Calu3 (cell line): ENCODE measurements at regions of chr1 and their contacts with region 1.

Region 1: DNA sequence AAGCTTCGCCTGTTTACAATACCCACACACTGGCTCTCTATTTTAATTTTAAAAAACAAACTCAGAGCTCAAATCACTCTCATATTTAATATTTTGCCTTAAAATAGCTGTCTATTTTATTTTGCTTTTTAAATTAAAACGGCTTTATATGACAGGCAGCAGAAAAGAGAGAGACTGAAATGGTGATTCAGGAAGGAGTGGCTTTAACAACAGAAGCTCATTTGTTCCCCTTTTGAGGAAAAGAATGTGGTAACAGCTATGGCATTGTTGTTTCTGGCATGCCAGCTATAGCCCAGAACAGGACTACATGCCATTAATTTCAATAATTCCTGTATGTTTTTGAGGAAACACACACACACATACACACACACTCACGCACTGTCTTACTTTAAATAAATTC is 234.2 kb upstream of the PTBP2 start:
- DNase-seq: peak; percentile 44
- H3K4me3 Mint-ChIP-seq: no peak overlapping the region
- H3K27ac Mint-ChIP-seq: peak overlapping the region; percentile 94
- H3K4me1 Mint-ChIP-seq: peaks cover 42% of the 10 kb centered on the region
- H3K27me3 Mint-ChIP-seq: no peaks in the 10 kb centered on the region
- CTCF ChIP-seq: no peak

Region 2: DNA sequence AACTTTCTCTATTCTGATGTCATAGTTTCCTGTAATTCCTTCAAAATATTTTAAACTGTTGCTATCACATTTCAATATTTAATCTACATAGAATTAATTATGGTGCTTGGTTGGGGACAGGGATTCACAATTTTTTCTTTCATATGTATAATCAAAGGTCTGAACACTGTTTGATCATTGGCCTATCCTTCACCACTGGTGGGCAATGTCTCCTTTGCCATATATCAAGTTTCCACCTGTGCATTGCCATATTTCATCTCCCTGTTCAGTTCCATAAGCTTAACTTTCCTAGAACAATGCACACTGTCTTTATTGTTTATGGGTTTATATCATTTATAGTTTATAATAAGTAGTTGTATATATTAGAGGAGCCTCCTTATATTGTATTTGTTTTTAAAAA is 140.7 kb before region 1 on chr1:
- CTCF ChIA-PET with region 1: no interaction called
- intact Hi-C with region 1: loop called (anchors 5 kb)
- DNase-seq: no peak
- H3K4me3 Mint-ChIP-seq: no peak overlapping the region
- H3K27ac Mint-ChIP-seq: no peak overlapping the region
- H3K4me1 Mint-ChIP-seq: no peaks in the 10 kb centered on the region
- H3K27me3 Mint-ChIP-seq: no peaks in the 10 kb centered on the region
- CTCF ChIP-seq: no peak

Region 3: GRCh38 chr1:96472471-96472870 is 14.9 kb before region 1 on chr1:
- CTCF ChIA-PET with region 1: interaction called, 4 read pairs
- intact Hi-C with region 1: loop called (anchors 1 kb)
- DNase-seq: no peak
- H3K4me3 Mint-ChIP-seq: no peak overlapping the region
- H3K27ac Mint-ChIP-seq: peak overlapping the region; percentile 80
- H3K4me1 Mint-ChIP-seq: peaks cover 41% of the 10 kb centered on the region
- H3K27me3 Mint-ChIP-seq: no peaks in the 10 kb centered on the region
- CTCF ChIP-seq: no peak

Region 4: GRCh38 chr1:96536581-96536980 is 49.2 kb after region 1 on chr1:
- CTCF ChIA-PET with region 1: no interaction called
- intact Hi-C with region 1: no loop called
- DNase-seq: no peak
- H3K4me3 Mint-ChIP-seq: no peak overlapping the region
- H3K27ac Mint-ChIP-seq: no peak overlapping the region
- H3K4me1 Mint-ChIP-seq: no peaks in the 10 kb centered on the region
- H3K27me3 Mint-ChIP-seq: no peaks in the 10 kb centered on the region
- CTCF ChIP-seq: no peak

Region 5: DNA sequence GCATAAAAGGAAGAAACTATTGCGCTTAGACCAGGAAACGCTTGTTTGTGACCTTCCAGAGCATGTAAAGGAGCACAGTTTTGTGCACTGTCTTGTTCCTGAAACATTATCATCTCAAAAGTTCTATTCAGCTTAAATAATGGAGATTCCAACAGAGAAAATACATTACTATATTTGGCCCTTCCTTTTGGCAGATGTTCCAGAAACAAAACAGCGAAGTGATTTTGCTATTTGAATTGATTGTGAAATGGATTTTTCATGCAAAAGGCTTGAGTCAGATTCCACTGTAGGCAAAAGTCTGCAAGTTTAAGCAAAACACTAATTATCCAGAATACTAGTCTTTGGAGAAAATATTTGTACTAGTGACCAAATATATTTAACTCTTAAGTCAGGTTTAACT is 153.9 kb after region 1 on chr1:
- CTCF ChIA-PET with region 1: no interaction called
- intact Hi-C with region 1: no loop called
- DNase-seq: no peak
- H3K4me3 Mint-ChIP-seq: no peak overlapping the region
- H3K27ac Mint-ChIP-seq: no peak overlapping the region
- H3K4me1 Mint-ChIP-seq: no peaks in the 10 kb centered on the region
- H3K27me3 Mint-ChIP-seq: no peaks in the 10 kb centered on the region
- CTCF ChIP-seq: no peak

Region 6: DNA sequence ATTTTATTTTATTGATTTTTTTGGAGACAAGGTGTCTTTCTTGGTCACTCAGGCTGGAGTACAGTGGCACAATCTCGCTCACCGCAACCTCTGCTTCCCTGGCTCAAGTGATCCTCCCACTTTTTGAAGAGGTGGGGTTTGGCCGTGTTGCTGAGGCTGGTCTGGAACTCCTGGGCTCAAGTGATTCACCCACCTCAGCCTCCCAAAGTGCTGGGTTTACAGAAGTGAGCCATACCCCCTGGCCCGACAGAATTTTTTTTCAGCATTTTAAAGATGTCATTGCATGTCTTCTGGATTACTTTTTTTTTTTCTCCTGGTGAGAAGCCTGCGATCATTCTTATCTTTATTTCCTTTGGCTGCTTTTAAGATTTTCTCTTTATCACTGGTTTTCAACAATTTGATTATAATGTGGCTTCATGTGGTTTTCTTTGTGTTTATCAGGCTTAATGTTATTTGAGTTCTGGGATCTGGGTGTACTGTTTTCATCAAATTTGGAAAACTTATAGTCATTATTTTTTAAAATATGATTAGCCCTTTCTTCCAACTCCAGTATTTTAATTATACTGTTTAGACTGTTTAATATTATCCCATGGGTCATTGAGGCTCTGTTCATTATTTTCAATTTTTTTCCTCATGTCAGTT is 211.1 kb after region 1 on chr1:
- CTCF ChIA-PET with region 1: no interaction called
- intact Hi-C with region 1: no loop called
- DNase-seq: no peak
- H3K4me3 Mint-ChIP-seq: no peak overlapping the region
- H3K27ac Mint-ChIP-seq: no peak overlapping the region
- H3K4me1 Mint-ChIP-seq: no peaks in the 10 kb centered on the region
- H3K27me3 Mint-ChIP-seq: no peaks in the 10 kb centered on the region
- CTCF ChIP-seq: no peak